ENCODE measurements at regions of chr13 and their contacts with region 1.

Region 1: GRCh38 chr13:24922745-24923591 is 159.0 kb downstream of the RNF17 start:
- DNase-seq: peak; percentile 79 to 93 (median 87)
- ATAC-seq: peak; percentile 100
- H3K4me3 ChIP-seq: peak overlapping the region; percentile 78
- H3K4me3 Mint-ChIP-seq: peak overlapping the region; percentile 89 to 100 (median 98)
- H3K27ac ChIP-seq: peak overlapping the region; percentile 71
- H3K27ac Mint-ChIP-seq: peak overlapping the region; percentile 73 to 95 (median 91)
- H3K4me1 ChIP-seq: no peaks in the 10 kb centered on the region
- H3K4me1 Mint-ChIP-seq: peaks cover 0 to 22% (median 14%) of the 10 kb centered on the region in 7 donors
- H3K27me3 ChIP-seq: no peaks in the 10 kb centered on the region
- H3K27me3 Mint-ChIP-seq: peaks cover 0 to 12% (median 0%) of the 10 kb centered on the region in 5 donors

Region 2: GRCh38 chr13:23888658-23889614 is 1034.0 kb before region 1 on chr13 and contains the start of gene MIPEP:
- CTCF ChIA-PET with region 1: no interaction called
- POLR2A ChIA-PET with region 1: no interaction called
- intact Hi-C with region 1: loop called in 1 of 2 experiments (anchors 1 kb)
- DNase-seq: peak; percentile 68 to 94 (median 83)
- ATAC-seq: peak; percentile 98
- H3K4me3 ChIP-seq: peak within 1 kb of the TSS; percentile 88
- H3K4me3 Mint-ChIP-seq: peak within 1 kb of the TSS; percentile 85 to 96 (median 92)
- H3K27ac ChIP-seq: peak within 1 kb of the TSS; percentile 70
- H3K27ac Mint-ChIP-seq: peak within 1 kb of the TSS; percentile 72 to 92 (median 84)
- H3K4me1 ChIP-seq: peaks cover 0 to 5% of the 10 kb centered on the region in 2 donors
- H3K4me1 Mint-ChIP-seq: peaks cover 12 to 31% (median 25%) of the 10 kb centered on the region in 7 donors
- H3K27me3 ChIP-seq: no peaks in the 10 kb centered on the region
- H3K27me3 Mint-ChIP-seq: no peaks in the 10 kb centered on the region
- total RNA-seq, gene MIPEP: 8.0 to 10.5 (median 9.2) TPM

Region 3: GRCh38 chr13:24264976-24265375 is 658.0 kb before region 1 on chr13:
- CTCF ChIA-PET with region 1: no interaction called
- POLR2A ChIA-PET with region 1: no interaction called
- intact Hi-C with region 1: loop called in 1 of 2 experiments (anchors 2 kb)
- DNase-seq: peak; percentile 48 to 85 (median 83)
- ATAC-seq: peak; percentile 97
- H3K4me3 ChIP-seq: peak overlapping the region; percentile 28
- H3K4me3 Mint-ChIP-seq: peak overlapping the region; percentile 79 to 85 (median 82)
- H3K27ac ChIP-seq: peak overlapping the region; percentile 89
- H3K27ac Mint-ChIP-seq: peak overlapping the region; percentile 91 to 100 (median 98)
- H3K4me1 ChIP-seq: peaks cover 88 to 94% of the 10 kb centered on the region in 2 donors
- H3K4me1 Mint-ChIP-seq: peaks cover 64 to 98% (median 94%) of the 10 kb centered on the region in 7 donors
- H3K27me3 ChIP-seq: no peaks in the 10 kb centered on the region
- H3K27me3 Mint-ChIP-seq: no peaks in the 10 kb centered on the region

Region 4: GRCh38 chr13:24512197-24512907 is 410.6 kb before region 1 on chr13 and contains the start of gene PARP4:
- CTCF ChIA-PET with region 1: no interaction called
- POLR2A ChIA-PET with region 1: no interaction called
- intact Hi-C with region 1: loop called (anchors 1 to 2 kb)
- DNase-seq: peak; percentile 49 to 74 (median 68)
- ATAC-seq: peak; percentile 85
- H3K4me3 ChIP-seq: peak within 1 kb of the TSS; percentile 95
- H3K4me3 Mint-ChIP-seq: peak within 1 kb of the TSS; percentile 88 to 96 (median 92)
- H3K27ac ChIP-seq: peak within 1 kb of the TSS; percentile 67
- H3K27ac Mint-ChIP-seq: peak within 1 kb of the TSS; percentile 68 to 93 (median 88)
- H3K4me1 ChIP-seq: peaks cover 3 to 7% of the 10 kb centered on the region in 2 donors
- H3K4me1 Mint-ChIP-seq: peaks cover 22 to 51% (median 41%) of the 10 kb centered on the region in 7 donors
- H3K27me3 ChIP-seq: no peaks in the 10 kb centered on the region
- H3K27me3 Mint-ChIP-seq: peaks cover 0 to 4% (median 0%) of the 10 kb centered on the region in 5 donors
- total RNA-seq, gene PARP4: 33.4 to 71.1 (median 65.4) TPM

Region 5: GRCh38 chr13:24683838-24684599 is 238.9 kb before region 1 on chr13:
- CTCF ChIA-PET with region 1: no interaction called
- POLR2A ChIA-PET with region 1: no interaction called
- intact Hi-C with region 1: loop called in 1 of 2 experiments (anchors 5 kb)
- DNase-seq: peak; percentile 28 to 63 (median 55)
- ATAC-seq: peak; percentile 88
- H3K4me3 ChIP-seq: no peak overlapping the region
- H3K4me3 Mint-ChIP-seq: peak overlapping the region; percentile 5 to 64 (median 39)
- H3K27ac ChIP-seq: no peak overlapping the region
- H3K27ac Mint-ChIP-seq: peak overlapping the region in 7 of 9 donors; percentile 0 to 87 (median 37)
- H3K4me1 ChIP-seq: peaks cover 15 to 30% of the 10 kb centered on the region in 2 donors
- H3K4me1 Mint-ChIP-seq: peaks cover 22 to 43% (median 30%) of the 10 kb centered on the region in 7 donors
- H3K27me3 ChIP-seq: peaks cover 4 to 10% of the 10 kb centered on the region in 2 donors
- H3K27me3 Mint-ChIP-seq: peaks cover 22 to 58% (median 33%) of the 10 kb centered on the region in 5 donors

Region 6: DNA sequence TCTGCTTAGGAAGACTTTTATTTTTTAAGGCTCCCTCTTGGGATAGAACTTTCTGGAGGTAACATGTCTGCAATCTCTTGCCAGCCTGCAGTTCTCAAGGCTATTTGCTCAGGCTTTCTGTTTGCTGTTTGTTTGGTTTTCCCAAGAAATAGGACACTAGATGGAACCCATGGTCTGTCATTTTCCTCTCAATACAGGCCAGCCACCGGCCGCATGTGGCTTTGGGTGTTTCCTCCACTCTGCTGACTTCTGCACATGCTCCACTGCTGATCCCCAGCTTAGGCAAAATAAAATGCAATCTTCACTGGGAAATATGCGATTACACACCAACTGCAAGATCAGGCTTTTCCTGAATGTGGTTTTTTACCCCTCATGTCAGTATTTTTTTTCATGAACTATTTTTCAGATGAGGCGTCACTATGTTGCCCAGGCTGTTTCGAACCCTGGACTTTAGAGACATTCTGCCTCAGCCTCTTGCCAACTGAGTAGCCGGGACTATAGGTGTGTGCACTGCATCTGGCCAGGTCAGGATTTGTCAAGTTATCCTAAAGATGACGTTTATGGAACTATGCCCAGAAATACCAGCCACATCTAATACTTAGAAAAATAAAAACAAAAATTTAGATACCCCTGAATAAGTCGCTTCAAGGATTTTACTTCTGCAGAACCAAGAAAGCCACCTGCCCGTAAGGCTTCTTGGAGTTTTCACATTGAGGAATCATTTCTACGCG is 78.7 kb after region 1 on chr13:
- CTCF ChIA-PET with region 1: no interaction called
- POLR2A ChIA-PET with region 1: no interaction called
- intact Hi-C with region 1: loop called in 1 of 2 experiments (anchors 10 kb)
- DNase-seq: no peak
- ATAC-seq: no peak
- H3K4me3 ChIP-seq: no peak overlapping the region
- H3K4me3 Mint-ChIP-seq: no peak overlapping the region
- H3K27ac ChIP-seq: no peak overlapping the region
- H3K27ac Mint-ChIP-seq: no peak overlapping the region
- H3K4me1 ChIP-seq: no peaks in the 10 kb centered on the region
- H3K4me1 Mint-ChIP-seq: peaks cover 0 to 3% (median 0%) of the 10 kb centered on the region in 7 donors
- H3K27me3 ChIP-seq: no peaks in the 10 kb centered on the region
- H3K27me3 Mint-ChIP-seq: peaks cover 56 to 68% (median 57%) of the 10 kb centered on the region in 5 donors

Region 7: DNA sequence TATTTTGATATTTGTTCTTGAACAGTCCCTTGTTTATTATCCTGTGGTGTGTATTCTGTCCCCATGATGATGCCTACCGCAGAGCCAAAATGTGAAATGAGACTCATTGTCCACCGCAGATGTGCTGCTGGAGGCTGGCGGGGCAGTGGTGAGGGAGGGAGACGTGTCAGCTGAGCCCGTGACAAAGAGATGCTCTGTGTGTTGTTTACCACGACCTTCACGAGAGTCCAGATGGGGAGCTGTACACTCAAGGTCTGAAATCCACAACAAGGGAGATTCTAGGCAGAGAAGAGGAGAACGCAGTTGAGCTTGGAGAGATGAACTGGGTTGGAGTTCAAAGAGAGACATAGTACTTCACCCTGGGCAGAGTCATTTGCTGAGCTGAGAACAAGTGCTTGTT is 270.0 kb after region 1 on chr13:
- CTCF ChIA-PET with region 1: no interaction called
- POLR2A ChIA-PET with region 1: no interaction called
- intact Hi-C with region 1: no loop called
- DNase-seq: no peak
- ATAC-seq: no peak
- H3K4me3 ChIP-seq: no peak overlapping the region
- H3K4me3 Mint-ChIP-seq: no peak overlapping the region
- H3K27ac ChIP-seq: no peak overlapping the region
- H3K27ac Mint-ChIP-seq: no peak overlapping the region
- H3K4me1 ChIP-seq: no peaks in the 10 kb centered on the region
- H3K4me1 Mint-ChIP-seq: no peaks in the 10 kb centered on the region
- H3K27me3 ChIP-seq: peaks cover 0 to 5% of the 10 kb centered on the region in 2 donors
- H3K27me3 Mint-ChIP-seq: peaks cover 32 to 59% (median 41%) of the 10 kb centered on the region in 5 donors

Region 8: GRCh38 chr13:25301347-25302047 is 378.5 kb after region 1 on chr13 and contains the start of gene NUP58:
- CTCF ChIA-PET with region 1: no interaction called
- POLR2A ChIA-PET with region 1: no interaction called
- intact Hi-C with region 1: loop called (anchors 1 kb)
- DNase-seq: peak; percentile 83 to 94 (median 92)
- ATAC-seq: peak; percentile 99
- H3K4me3 ChIP-seq: peak within 1 kb of the TSS; percentile 64
- H3K4me3 Mint-ChIP-seq: peak within 1 kb of the TSS; percentile 86 to 95 (median 92)
- H3K27ac ChIP-seq: peak within 1 kb of the TSS; percentile 93
- H3K27ac Mint-ChIP-seq: peak within 1 kb of the TSS; percentile 87 to 97 (median 93)
- H3K4me1 ChIP-seq: peaks cover 13 to 22% of the 10 kb centered on the region in 2 donors
- H3K4me1 Mint-ChIP-seq: peaks cover 21 to 51% (median 47%) of the 10 kb centered on the region in 7 donors
- H3K27me3 ChIP-seq: peaks cover 0 to 5% of the 10 kb centered on the region in 2 donors
- H3K27me3 Mint-ChIP-seq: peaks cover 7 to 19% (median 10%) of the 10 kb centered on the region in 5 donors
- total RNA-seq, gene NUP58: 41.1 to 89.1 (median 57.0) TPM